Right ventricle myocardium inferior (tissue), 1 donor: ENCODE measurements at regions of chr14 and their contacts with region 1.

Region 1: DNA sequence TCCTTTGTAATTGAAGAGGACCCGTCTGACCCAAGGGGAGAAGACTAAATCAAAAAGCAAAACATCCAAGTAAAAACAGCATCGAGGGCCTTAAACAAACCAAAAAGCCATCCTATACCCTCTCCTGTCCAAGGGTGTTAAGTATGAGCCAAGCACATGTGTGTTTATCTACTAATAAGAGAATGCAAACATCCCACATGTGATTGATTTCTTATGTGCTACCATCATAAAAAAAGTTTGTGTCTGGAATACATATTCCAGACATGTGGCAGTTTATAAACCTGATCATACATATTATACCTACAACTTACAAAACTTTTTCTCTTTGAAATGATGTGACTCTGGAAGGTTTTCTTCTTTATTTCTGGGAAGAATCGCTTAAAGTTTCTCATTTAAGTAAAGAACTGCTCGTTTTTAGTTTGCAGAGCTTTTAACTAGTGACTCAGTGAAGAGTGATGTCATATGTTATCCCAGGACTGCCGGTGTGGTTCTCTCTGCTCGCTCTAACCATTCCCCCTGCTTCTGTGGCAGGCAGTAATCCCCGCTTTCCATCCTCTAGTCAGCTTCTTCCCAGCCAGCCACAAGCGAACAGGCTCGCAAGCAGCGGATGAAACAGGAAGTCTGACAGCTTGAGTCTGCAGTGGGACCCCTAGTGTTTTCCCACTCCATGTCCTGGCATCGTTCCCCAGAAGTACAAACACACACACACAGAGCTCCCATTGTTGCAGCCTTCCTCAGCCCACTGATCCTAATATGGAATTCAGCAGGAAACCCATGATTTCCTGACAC is 431 bp upstream of the RHOJ start:
- DNase-seq: peak; percentile 87
- ATAC-seq: peak; percentile 96

Region 2: DNA sequence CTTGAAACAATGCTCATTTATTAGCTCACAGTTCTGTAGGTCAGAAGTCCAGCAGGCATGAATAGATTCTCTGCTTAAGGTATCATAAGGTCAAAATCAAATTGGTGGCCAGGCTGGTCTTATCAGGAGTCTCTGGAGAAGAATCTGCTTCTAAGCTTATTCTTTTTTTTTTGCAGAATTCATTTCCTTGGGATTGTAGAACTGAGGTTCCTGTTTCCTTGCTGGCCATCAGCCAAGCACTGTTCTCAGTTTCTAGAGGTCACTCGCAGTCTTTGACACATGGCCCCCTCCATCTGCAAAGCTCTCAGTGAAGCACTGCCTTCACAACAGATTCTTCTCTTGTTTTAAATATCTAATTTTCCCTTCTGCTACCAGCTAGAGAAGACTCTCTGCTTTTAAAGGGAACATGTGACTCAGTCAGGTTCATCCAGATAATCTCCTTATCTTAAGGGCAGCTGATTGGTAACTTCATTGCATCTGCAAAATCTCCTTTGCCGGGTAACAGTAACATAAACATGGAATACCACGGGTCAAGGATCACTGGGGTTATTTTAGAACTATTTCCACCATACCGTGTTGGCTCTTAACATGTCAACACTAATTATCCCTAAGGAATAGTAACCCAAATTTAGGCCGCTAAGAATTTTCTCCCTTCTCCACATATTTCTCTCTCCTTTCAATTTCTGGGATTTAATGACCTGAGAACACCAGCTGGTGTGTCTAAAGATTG is 25.7 kb after region 1 on chr14:
- intact Hi-C with region 1: loop called (anchors 2 kb)
- DNase-seq: no peak
- ATAC-seq: peak; percentile 34